ENCODE measurements at regions of chr3 and their contacts with region 1.

Region 1: GRCh38 chr3:142828703-142829305 is 60.1 kb downstream of the PCOLCE2 start:
- DNase-seq: peak; percentile 63 to 83 (median 78)
- H3K4me3 ChIP-seq: no peak overlapping the region
- H3K27ac ChIP-seq: no peak overlapping the region
- H3K4me1 ChIP-seq: no peaks in the 10 kb centered on the region
- H3K27me3 ChIP-seq: peaks cover 0 to 4% (median 0%) of the 10 kb centered on the region in 5 experiments

Region 2: GRCh38 chr3:142586803-142587406 is 241.9 kb before region 1 on chr3:
- CTCF ChIA-PET with region 1: interaction called, 15 read pairs
- POLR2A ChIA-PET with region 1: no interaction called
- DNase-seq: peak; percentile 75 to 82 (median 76)
- H3K4me3 ChIP-seq: no peak overlapping the region
- H3K27ac ChIP-seq: no peak overlapping the region
- H3K4me1 ChIP-seq: no peaks in the 10 kb centered on the region
- H3K27me3 ChIP-seq: peaks cover 0 to 2% (median 0%) of the 10 kb centered on the region in 5 experiments

Region 3: GRCh38 chr3:142705198-142705597 is 123.6 kb before region 1 on chr3:
- CTCF ChIA-PET with region 1: no interaction called
- POLR2A ChIA-PET with region 1: no interaction called
- DNase-seq: no peak
- H3K4me3 ChIP-seq: no peak overlapping the region
- H3K27ac ChIP-seq: no peak overlapping the region
- H3K4me1 ChIP-seq: no peaks in the 10 kb centered on the region
- H3K27me3 ChIP-seq: no peaks in the 10 kb centered on the region

Region 4: GRCh38 chr3:142817897-142818296 is 10.9 kb before region 1 on chr3:
- CTCF ChIA-PET with region 1: interaction called, 31 read pairs
- POLR2A ChIA-PET with region 1: no interaction called
- DNase-seq: no peak
- H3K4me3 ChIP-seq: no peak overlapping the region
- H3K27ac ChIP-seq: no peak overlapping the region
- H3K4me1 ChIP-seq: no peaks in the 10 kb centered on the region
- H3K27me3 ChIP-seq: peaks cover 0 to 3% (median 0%) of the 10 kb centered on the region in 5 experiments

Region 5: GRCh38 chr3:142850386-142851023 is 21.7 kb after region 1 on chr3:
- CTCF ChIA-PET with region 1: interaction called, 15 read pairs
- POLR2A ChIA-PET with region 1: no interaction called
- DNase-seq: peak in 1 of 3 donors; percentile 4
- H3K4me3 ChIP-seq: no peak overlapping the region
- H3K27ac ChIP-seq: no peak overlapping the region
- H3K4me1 ChIP-seq: no peaks in the 10 kb centered on the region
- H3K27me3 ChIP-seq: peaks cover 0 to 1% (median 0%) of the 10 kb centered on the region in 5 experiments

Region 6: GRCh38 chr3:142904639-142905436 is 76.0 kb after region 1 on chr3:
- CTCF ChIA-PET with region 1: interaction called, 46 read pairs
- POLR2A ChIA-PET with region 1: no interaction called
- DNase-seq: peak; percentile 75 to 91 (median 89)
- H3K4me3 ChIP-seq: no peak overlapping the region
- H3K27ac ChIP-seq: no peak overlapping the region
- H3K4me1 ChIP-seq: peaks cover 0 to 7% (median 0%) of the 10 kb centered on the region in 4 experiments
- H3K27me3 ChIP-seq: no peaks in the 10 kb centered on the region

Region 7: GRCh38 chr3:142993958-142994442 is 165.2 kb after region 1 on chr3:
- CTCF ChIA-PET with region 1: interaction called, 23 read pairs
- POLR2A ChIA-PET with region 1: no interaction called
- DNase-seq: peak; percentile 78 to 89 (median 84)
- H3K4me3 ChIP-seq: no peak overlapping the region
- H3K27ac ChIP-seq: no peak overlapping the region
- H3K4me1 ChIP-seq: no peaks in the 10 kb centered on the region
- H3K27me3 ChIP-seq: no peaks in the 10 kb centered on the region

Measured in common myeloid progenitor, CD34-positive (primary cell).